Activated CD4-positive, alpha-beta memory T cell treated with anti-CD3 and anti-CD28 coated beads for 36 hours (primary cell): ENCODE measurements at regions of chr19 and their contacts with region 1.

Region 1: DNA sequence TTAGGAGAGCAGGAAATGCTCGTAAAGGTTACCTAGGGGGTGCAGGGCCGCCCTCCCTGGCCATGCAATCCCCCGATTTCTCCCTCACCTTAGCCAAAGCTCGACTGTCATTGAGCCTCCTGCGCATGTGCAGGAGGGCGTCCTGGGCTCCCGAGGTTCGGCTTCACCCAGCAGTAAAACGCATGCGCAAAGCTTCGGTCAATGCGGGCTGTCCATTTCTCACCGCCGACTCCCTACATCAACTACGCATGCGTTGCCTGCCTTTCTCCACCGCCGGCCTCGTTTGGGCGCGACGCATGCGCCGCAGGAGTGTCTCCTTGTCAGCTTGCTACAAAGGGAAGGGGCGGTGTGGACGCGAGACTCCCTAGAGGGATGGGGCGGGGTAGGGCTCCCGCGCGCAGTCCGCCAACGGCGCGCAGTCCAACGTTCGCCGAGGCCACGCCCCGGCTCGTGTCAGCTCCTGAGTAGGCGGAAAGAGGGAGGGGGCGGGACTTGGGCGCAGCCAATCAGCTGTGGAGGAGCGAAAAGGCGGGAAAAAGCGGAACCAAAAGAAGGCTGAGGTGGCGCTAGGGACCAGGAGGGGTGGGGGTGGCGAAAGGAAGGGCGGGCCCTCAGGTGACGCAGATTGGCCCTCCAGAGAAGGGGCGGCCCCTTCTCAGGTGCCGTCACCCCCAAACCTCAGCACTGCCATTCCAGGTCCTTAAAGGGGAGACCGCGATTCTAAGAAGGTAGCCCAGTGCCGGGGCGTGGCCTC is at the starts of genes SYNGR4 and TMEM143:
- DNase-seq: peak; percentile 99
- H3K4me3 Mint-ChIP-seq: peak within 1 kb of the TSS; percentile 88
- H3K27ac Mint-ChIP-seq: peak within 1 kb of the TSS; percentile 94
- H3K4me1 Mint-ChIP-seq: peaks cover 14% of the 10 kb centered on the region
- H3K27me3 Mint-ChIP-seq: no peaks in the 10 kb centered on the region
- total RNA-seq, gene SYNGR4: 0.21 TPM in 1 of 2 experiments, not detected in the other
- total RNA-seq, gene TMEM143: 17.1 to 17.9 TPM

Region 2: DNA sequence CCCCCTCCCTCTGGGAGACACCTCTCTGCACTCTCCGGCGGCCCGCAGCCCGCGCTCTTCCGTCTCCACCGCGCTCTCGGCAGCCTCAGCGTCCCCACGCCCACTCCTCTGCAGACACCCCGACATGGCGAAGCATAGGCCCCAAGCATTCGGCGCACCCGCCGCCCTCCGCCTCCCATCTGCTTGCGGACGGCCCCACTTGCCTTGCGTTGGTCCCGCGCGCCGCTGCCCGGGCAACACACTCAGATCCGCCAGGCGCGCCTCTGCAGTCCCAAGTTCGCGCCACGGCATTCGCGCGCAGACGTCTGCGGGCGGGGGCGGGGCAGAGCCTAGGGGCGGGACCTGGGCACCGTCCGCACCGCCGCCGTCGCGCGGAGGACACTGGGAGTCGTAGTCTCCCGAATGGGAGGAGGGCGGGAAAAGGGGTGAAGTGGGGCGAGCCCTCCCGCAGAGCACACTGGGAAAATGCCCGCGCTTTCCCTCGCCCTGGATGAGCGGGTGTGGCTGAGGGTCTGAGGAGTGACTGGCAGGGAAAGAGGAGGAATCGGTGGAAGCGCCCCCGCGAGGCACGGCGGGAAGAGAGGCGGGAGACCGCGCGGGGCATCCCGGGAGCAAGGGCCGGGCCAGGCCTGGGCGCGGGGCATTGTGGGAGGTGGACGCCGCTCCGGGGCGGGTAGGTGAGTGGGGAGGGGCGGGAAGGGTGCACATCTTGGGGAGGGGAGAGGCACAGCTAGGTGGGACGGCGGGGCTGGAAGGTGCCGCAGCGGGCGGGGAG is 193.8 kb before region 1 on chr19 and contains the starts of genes LIG1 and ZSWIM9:
- CTCF ChIA-PET with region 1: no interaction called
- POLR2A ChIA-PET with region 1: interaction called, 3 read pairs
- intact Hi-C with region 1: loop called (anchors 1 kb)
- DNase-seq: peak; percentile 94
- H3K4me3 Mint-ChIP-seq: peak within 1 kb of the TSS; percentile 95
- H3K27ac Mint-ChIP-seq: peak within 1 kb of the TSS; percentile 97
- H3K4me1 Mint-ChIP-seq: peaks cover 39% of the 10 kb centered on the region
- H3K27me3 Mint-ChIP-seq: no peaks in the 10 kb centered on the region
- total RNA-seq, gene LIG1: 174 TPM
- total RNA-seq, gene ZSWIM9: 7.4 to 8.0 TPM

Region 3: GRCh38 chr19:48351341-48351752 is 12.6 kb before region 1 on chr19:
- CTCF ChIA-PET with region 1: interaction called, 14 read pairs
- POLR2A ChIA-PET with region 1: interaction called, 4 read pairs
- intact Hi-C with region 1: no loop called
- DNase-seq: peak; percentile 89
- H3K4me3 Mint-ChIP-seq: no peak overlapping the region
- H3K27ac Mint-ChIP-seq: no peak overlapping the region
- H3K4me1 Mint-ChIP-seq: peaks cover 4% of the 10 kb centered on the region
- H3K27me3 Mint-ChIP-seq: no peaks in the 10 kb centered on the region

Region 4: GRCh38 chr19:48419158-48419920 is 55.4 kb after region 1 on chr19:
- CTCF ChIA-PET with region 1: no interaction called
- POLR2A ChIA-PET with region 1: no interaction called
- intact Hi-C with region 1: loop called (anchors 1 kb)
- DNase-seq: peak; percentile 87
- H3K4me3 Mint-ChIP-seq: peak overlapping the region; percentile 67
- H3K27ac Mint-ChIP-seq: peak overlapping the region; percentile 19
- H3K4me1 Mint-ChIP-seq: peaks cover 27% of the 10 kb centered on the region
- H3K27me3 Mint-ChIP-seq: peaks cover 9% of the 10 kb centered on the region

Region 5: DNA sequence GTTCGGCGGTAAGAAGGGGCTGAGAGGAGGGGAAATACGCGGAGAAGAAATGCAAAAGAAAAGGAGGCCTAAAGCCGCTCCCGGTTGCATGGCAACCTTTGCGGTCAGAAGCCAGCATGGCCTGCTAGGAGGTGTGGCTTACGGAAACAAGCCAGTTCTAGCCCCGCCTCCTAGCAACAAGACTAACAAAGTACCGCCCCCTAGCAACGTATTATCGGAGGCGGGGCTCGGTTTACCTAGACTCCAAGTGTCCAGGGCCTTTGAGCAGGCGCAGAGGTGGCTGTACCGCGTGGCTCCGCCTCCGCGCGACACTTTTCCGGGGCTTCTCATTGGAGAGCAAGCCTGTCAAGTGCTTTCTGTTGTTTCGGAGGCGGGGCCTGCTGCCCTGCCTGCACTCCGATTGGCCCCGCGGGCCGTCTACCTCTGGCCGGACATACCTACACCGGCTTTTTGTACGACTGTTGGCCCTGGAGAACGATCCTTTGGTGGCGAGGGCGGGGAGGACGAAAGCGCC is 104.8 kb after region 1 on chr19:
- CTCF ChIA-PET with region 1: no interaction called
- POLR2A ChIA-PET with region 1: interaction called, 3 read pairs
- intact Hi-C with region 1: loop called (anchors 1 kb)
- DNase-seq: peak; percentile 100
- H3K4me3 Mint-ChIP-seq: peak overlapping the region; percentile 83
- H3K27ac Mint-ChIP-seq: peak overlapping the region; percentile 84
- H3K4me1 Mint-ChIP-seq: peaks cover 22% of the 10 kb centered on the region
- H3K27me3 Mint-ChIP-seq: no peaks in the 10 kb centered on the region